ENCODE measurements at regions of chr20 and their contacts with region 1.

Region 1: GRCh38 chr20:31661625-31662371 is 24.1 kb downstream of the COX4I2 start:
- DNase-seq: peak; percentile 87
- ATAC-seq: peak; percentile 96
- H3K4me3 ChIP-seq: peak overlapping the region; percentile 5 to 60 (median 52)
- H3K4me3 Mint-ChIP-seq: peak overlapping the region; percentile 69
- H3K27ac ChIP-seq: peak overlapping the region; percentile 29 to 48
- H3K27ac Mint-ChIP-seq: peak overlapping the region; percentile 85
- H3K4me1 ChIP-seq: peaks cover 7 to 17% of the 10 kb centered on the region in 2 donors
- H3K4me1 Mint-ChIP-seq: peaks cover 28% of the 10 kb centered on the region
- H3K27me3 ChIP-seq: no peaks in the 10 kb centered on the region
- H3K27me3 Mint-ChIP-seq: no peaks in the 10 kb centered on the region
- CTCF ChIP-seq: peak; percentile 80

Region 2: DNA sequence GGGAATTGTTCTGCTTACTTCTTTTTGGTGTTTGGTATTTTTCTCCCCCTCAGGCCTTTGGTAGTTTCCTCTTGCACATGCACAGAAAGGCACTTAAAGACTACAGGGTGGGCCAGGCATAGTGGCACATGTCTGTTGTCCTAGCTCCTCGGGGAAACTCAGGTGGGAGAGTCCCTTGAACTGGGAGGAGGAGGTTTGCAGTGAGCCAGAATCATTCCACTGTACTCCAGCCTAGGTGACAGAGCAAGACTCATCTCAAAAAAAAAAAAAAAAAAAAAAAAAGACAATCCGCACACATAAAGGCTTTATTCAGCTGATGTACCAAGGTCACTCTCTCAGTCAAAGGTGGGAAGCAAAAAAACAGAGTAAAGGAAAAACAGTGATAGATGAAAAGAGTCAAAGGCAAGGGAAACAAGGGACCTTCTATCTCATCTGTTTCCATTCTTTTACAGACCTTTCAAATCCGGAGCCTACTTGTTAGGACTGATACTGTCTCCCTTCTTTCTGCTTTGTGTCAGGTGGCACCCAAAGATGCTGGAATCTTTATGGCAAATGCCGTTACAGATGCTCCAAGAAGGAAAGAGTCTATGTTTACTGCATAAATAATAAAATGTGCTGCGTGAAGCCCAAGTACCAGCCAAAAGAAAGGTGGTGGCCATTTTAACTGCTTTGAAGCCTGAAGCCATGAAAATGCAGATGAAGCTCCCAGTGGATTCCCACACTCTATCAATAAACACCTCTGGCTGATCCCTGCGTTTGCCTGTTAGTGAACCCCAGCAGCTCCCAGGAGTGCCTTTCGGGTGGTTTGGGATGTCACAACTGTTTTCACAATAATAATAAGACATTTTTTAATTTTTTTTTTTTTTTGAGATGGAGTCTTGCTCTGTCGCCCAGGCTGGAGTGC is 212.0 kb before region 1 on chr20:
- CTCF ChIA-PET with region 1: no interaction called
- POLR2A ChIA-PET with region 1: no interaction called
- intact Hi-C with region 1: no loop called
- DNase-seq: no peak
- ATAC-seq: no peak
- H3K4me3 ChIP-seq: no peak overlapping the region
- H3K4me3 Mint-ChIP-seq: no peak overlapping the region
- H3K27ac ChIP-seq: no peak overlapping the region
- H3K27ac Mint-ChIP-seq: no peak overlapping the region
- H3K4me1 ChIP-seq: no peaks in the 10 kb centered on the region
- H3K4me1 Mint-ChIP-seq: no peaks in the 10 kb centered on the region
- H3K27me3 ChIP-seq: peaks cover 0 to 2% (median 0%) of the 10 kb centered on the region in 4 experiments
- H3K27me3 Mint-ChIP-seq: peaks cover 34% of the 10 kb centered on the region
- CTCF ChIP-seq: no peak

Region 3: GRCh38 chr20:31605031-31605901 is 56.5 kb before region 1 on chr20 and contains the start of gene ID1:
- CTCF ChIA-PET with region 1: no interaction called
- POLR2A ChIA-PET with region 1: no interaction called
- intact Hi-C with region 1: loop called (anchors 1 kb)
- DNase-seq: peak; percentile 92
- ATAC-seq: peak; percentile 90
- H3K4me3 ChIP-seq: peak within 1 kb of the TSS; percentile 50 to 79 (median 66)
- H3K4me3 Mint-ChIP-seq: peak within 1 kb of the TSS; percentile 96
- H3K27ac ChIP-seq: peak within 1 kb of the TSS in 1 of 2 donors; percentile 24
- H3K27ac Mint-ChIP-seq: peak within 1 kb of the TSS; percentile 74
- H3K4me1 ChIP-seq: peaks cover 24 to 26% of the 10 kb centered on the region in 2 donors
- H3K4me1 Mint-ChIP-seq: peaks cover 29% of the 10 kb centered on the region
- H3K27me3 ChIP-seq: peaks cover 0 to 66% (median 35%) of the 10 kb centered on the region in 4 experiments
- H3K27me3 Mint-ChIP-seq: peaks cover 45% of the 10 kb centered on the region
- CTCF ChIP-seq: peak; percentile 1
- total RNA-seq, gene ID1: 3.4 and 4.4 TPM in 2 replicates

Region 4: DNA sequence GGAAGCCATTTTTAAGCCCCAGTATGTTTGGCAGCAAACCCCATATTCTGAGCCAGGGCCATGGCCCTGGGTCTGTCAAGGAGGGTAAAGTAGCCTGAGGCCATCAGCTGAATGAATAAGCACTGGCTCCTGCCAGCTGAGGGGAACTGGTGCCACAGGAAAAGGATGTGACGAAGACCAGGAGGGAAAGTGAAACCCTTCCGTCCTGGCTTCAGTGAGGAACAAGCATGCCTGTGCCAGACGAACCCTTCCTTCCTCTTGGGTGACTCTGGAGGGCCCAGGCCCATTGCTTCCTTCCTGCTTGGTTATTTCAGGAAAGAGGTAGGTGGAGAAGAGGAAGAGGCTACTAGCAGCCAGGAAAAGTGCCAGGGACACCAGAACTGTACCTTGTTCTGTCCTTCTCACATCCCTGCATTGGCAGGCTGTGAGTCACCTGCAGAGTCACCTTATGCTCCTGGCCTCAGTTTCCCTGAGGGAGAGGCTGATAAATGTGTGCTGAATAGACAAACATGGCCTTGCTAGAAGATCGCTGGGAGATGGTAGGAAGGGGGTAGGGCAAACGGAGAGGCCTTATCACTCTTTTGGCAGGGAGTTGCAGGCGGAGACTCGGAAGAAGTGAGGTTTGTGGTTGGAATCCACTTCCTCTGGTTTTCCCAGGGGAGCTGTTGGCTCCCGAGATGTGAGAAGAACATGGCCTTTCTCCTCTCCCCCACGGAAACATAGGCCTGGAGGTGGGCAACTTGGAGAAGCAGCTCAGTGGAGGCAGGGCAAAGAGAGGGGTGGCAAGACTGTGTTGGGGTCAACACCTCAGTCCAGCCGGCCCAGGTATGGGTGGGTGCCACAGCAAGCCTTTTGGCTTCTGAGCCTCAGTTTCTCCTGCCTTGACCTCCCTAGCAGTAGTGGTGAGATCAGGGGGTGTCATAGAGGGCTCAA is 13.4 kb after region 1 on chr20:
- CTCF ChIA-PET with region 1: interaction called, 35 read pairs
- POLR2A ChIA-PET with region 1: interaction called, 3 read pairs
- intact Hi-C with region 1: no loop called
- DNase-seq: peak; percentile 79
- ATAC-seq: peak; percentile 80
- H3K4me3 ChIP-seq: peak overlapping the region; percentile 52 to 90 (median 81)
- H3K4me3 Mint-ChIP-seq: peak overlapping the region; percentile 92
- H3K27ac ChIP-seq: peak overlapping the region; percentile 64 to 92
- H3K27ac Mint-ChIP-seq: peak overlapping the region; percentile 93
- H3K4me1 ChIP-seq: peaks cover 26 to 34% of the 10 kb centered on the region in 2 donors
- H3K4me1 Mint-ChIP-seq: peaks cover 48% of the 10 kb centered on the region
- H3K27me3 ChIP-seq: no peaks in the 10 kb centered on the region
- H3K27me3 Mint-ChIP-seq: no peaks in the 10 kb centered on the region
- CTCF ChIP-seq: no peak

Region 5: GRCh38 chr20:31691646-31692275 is 30.0 kb after region 1 on chr20:
- CTCF ChIA-PET with region 1: interaction called, 18 read pairs
- POLR2A ChIA-PET with region 1: no interaction called
- intact Hi-C with region 1: no loop called
- DNase-seq: no peak
- ATAC-seq: no peak
- H3K4me3 ChIP-seq: no peak overlapping the region
- H3K4me3 Mint-ChIP-seq: peak overlapping the region; percentile 55
- H3K27ac ChIP-seq: no peak overlapping the region
- H3K27ac Mint-ChIP-seq: peak overlapping the region; percentile 73
- H3K4me1 ChIP-seq: peaks cover 9 to 21% of the 10 kb centered on the region in 2 donors
- H3K4me1 Mint-ChIP-seq: peaks cover 29% of the 10 kb centered on the region
- H3K27me3 ChIP-seq: no peaks in the 10 kb centered on the region
- H3K27me3 Mint-ChIP-seq: no peaks in the 10 kb centered on the region
- CTCF ChIP-seq: no peak

Region 6: GRCh38 chr20:31781945-31782344 is 120.1 kb after region 1 on chr20:
- CTCF ChIA-PET with region 1: no interaction called
- POLR2A ChIA-PET with region 1: no interaction called
- intact Hi-C with region 1: no loop called
- DNase-seq: no peak
- ATAC-seq: no peak
- H3K4me3 ChIP-seq: no peak overlapping the region
- H3K4me3 Mint-ChIP-seq: no peak overlapping the region
- H3K27ac ChIP-seq: no peak overlapping the region
- H3K27ac Mint-ChIP-seq: no peak overlapping the region
- H3K4me1 ChIP-seq: no peaks in the 10 kb centered on the region
- H3K4me1 Mint-ChIP-seq: no peaks in the 10 kb centered on the region
- H3K27me3 ChIP-seq: no peaks in the 10 kb centered on the region
- H3K27me3 Mint-ChIP-seq: no peaks in the 10 kb centered on the region
- CTCF ChIP-seq: no peak